ENCODE measurements at regions of chr3 and their contacts with region 1.

Region 1: GRCh38 chr3:151168269-151169094 is 34.5 kb downstream of the GPR171 start:
- DNase-seq: peak; percentile 89
- H3K4me3 Mint-ChIP-seq: no peak overlapping the region
- H3K27ac Mint-ChIP-seq: peak overlapping the region; percentile 68
- H3K4me1 Mint-ChIP-seq: peaks cover 52% of the 10 kb centered on the region
- H3K27me3 Mint-ChIP-seq: no peaks in the 10 kb centered on the region

Region 2: GRCh38 chr3:151183265-151183671 is 14.8 kb after region 1 on chr3:
- CTCF ChIA-PET with region 1: interaction called, 12 read pairs
- DNase-seq: peak; percentile 46
- H3K4me3 Mint-ChIP-seq: peak overlapping the region; percentile 49
- H3K27ac Mint-ChIP-seq: peak overlapping the region; percentile 89
- H3K4me1 Mint-ChIP-seq: peaks cover 58% of the 10 kb centered on the region
- H3K27me3 Mint-ChIP-seq: peaks cover 8% of the 10 kb centered on the region

Region 3: DNA sequence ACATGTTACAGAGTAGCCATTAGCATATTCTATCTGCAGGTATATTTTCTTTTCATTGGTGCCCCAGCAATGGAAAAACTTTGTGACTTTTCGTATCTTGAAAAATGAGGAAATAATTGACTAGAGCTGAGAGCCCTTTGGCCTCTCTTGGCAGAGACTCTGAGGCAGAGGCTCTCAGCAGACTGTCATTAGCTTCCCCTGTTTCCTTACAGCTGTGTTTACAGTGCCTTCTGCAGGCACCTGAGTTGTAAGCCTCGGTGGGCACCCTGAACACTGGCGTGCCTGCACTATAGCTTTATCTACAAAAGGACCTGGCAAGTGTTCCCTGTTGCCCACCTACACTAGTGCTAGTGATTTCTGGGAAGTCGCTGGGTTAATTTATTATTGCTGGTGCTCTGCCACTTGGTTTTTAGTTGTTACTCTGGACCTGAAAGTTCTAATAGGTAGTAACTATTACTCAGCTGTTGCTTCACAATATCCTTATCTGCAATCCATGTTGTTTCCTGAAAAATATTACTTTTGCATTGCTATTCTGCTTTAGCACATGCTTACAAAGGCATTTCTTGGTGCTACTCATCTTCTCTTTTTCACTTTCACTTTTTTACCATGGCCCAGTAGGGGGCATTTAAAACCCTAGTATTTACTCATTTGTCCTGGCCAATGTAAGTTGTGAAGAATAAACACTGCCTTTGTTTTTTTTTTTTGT is 42.3 kb after region 1 on chr3:
- CTCF ChIA-PET with region 1: interaction called, 63 read pairs
- DNase-seq: peak; percentile 43
- H3K4me3 Mint-ChIP-seq: peak overlapping the region; percentile 61
- H3K27ac Mint-ChIP-seq: peak overlapping the region; percentile 89
- H3K4me1 Mint-ChIP-seq: peaks cover 59% of the 10 kb centered on the region
- H3K27me3 Mint-ChIP-seq: peaks cover 6% of the 10 kb centered on the region

Region 4: GRCh38 chr3:151227807-151228665 is 59.6 kb after region 1 on chr3:
- CTCF ChIA-PET with region 1: interaction called, 147 read pairs
- DNase-seq: peak; percentile 88
- H3K4me3 Mint-ChIP-seq: no peak overlapping the region
- H3K27ac Mint-ChIP-seq: peak overlapping the region; percentile 83
- H3K4me1 Mint-ChIP-seq: peaks cover 73% of the 10 kb centered on the region
- H3K27me3 Mint-ChIP-seq: peaks cover 2% of the 10 kb centered on the region

Region 5: GRCh38 chr3:151282921-151283320 is 114.4 kb after region 1 on chr3:
- CTCF ChIA-PET with region 1: interaction called, 167 read pairs
- DNase-seq: no peak
- H3K4me3 Mint-ChIP-seq: no peak overlapping the region
- H3K27ac Mint-ChIP-seq: peak overlapping the region; percentile 72
- H3K4me1 Mint-ChIP-seq: peaks cover 51% of the 10 kb centered on the region
- H3K27me3 Mint-ChIP-seq: no peaks in the 10 kb centered on the region